Body of pancreas (tissue), 4 donors: ENCODE measurements at regions of chr3 and their contacts with region 1.

Region 1: GRCh38 chr3:141049681-141050080 is 1.5 kb upstream of the SPSB4 start:
- DNase-seq: no peak
- ATAC-seq: no peak
- H3K4me3 ChIP-seq: no peak overlapping the region
- H3K27ac ChIP-seq: no peak overlapping the region
- H3K4me1 ChIP-seq: peaks cover 35% of the 10 kb centered on the region
- H3K27me3 ChIP-seq: no peaks in the 10 kb centered on the region
- CTCF ChIP-seq: peak in 4 of 7 experiments; percentile 17 to 30 (median 22)
- POLR2A ChIP-seq: no peak

Region 2: GRCh38 chr3:140686948-140687347 is 362.7 kb before region 1 on chr3:
- intact Hi-C with region 1: no loop called
- DNase-seq: no peak
- ATAC-seq: no peak
- H3K4me3 ChIP-seq: no peak overlapping the region
- H3K27ac ChIP-seq: no peak overlapping the region
- H3K4me1 ChIP-seq: no peaks in the 10 kb centered on the region
- H3K27me3 ChIP-seq: no peaks in the 10 kb centered on the region
- CTCF ChIP-seq: no peak
- POLR2A ChIP-seq: no peak

Region 3: DNA sequence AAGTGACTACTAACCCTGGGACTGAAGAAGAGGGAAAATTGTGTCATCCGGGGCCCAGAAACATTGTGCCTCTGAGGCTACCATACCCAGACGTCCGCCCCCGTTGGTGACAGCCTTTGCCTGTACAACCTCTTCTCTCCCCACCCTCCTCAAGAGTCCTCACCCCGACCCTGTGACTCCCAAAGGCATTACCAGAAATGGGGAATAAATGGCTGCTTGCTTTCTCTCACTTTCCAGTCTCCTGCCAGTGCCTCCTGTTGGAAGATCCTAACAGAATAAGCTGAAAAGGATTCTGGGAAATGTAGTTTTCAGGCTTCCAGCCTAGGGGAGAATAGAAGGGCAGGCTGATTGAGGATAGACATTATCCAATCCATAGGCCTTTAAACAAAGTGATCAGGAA is 138.8 kb before region 1 on chr3:
- intact Hi-C with region 1: no loop called
- DNase-seq: no peak
- ATAC-seq: no peak
- H3K4me3 ChIP-seq: no peak overlapping the region
- H3K27ac ChIP-seq: no peak overlapping the region
- H3K4me1 ChIP-seq: peaks cover 18% of the 10 kb centered on the region
- H3K27me3 ChIP-seq: no peaks in the 10 kb centered on the region
- CTCF ChIP-seq: no peak
- POLR2A ChIP-seq: no peak

Region 4: GRCh38 chr3:141105828-141106628 is 56.3 kb after region 1 on chr3:
- intact Hi-C with region 1: loop called (anchors 5 kb)
- DNase-seq: peak; percentile 81 to 88 (median 84)
- ATAC-seq: no peak
- H3K4me3 ChIP-seq: no peak overlapping the region
- H3K27ac ChIP-seq: no peak overlapping the region
- H3K4me1 ChIP-seq: peaks cover 50% of the 10 kb centered on the region
- H3K27me3 ChIP-seq: no peaks in the 10 kb centered on the region
- CTCF ChIP-seq: peak; percentile 46 to 83 (median 68)
- POLR2A ChIP-seq: no peak

Region 5: DNA sequence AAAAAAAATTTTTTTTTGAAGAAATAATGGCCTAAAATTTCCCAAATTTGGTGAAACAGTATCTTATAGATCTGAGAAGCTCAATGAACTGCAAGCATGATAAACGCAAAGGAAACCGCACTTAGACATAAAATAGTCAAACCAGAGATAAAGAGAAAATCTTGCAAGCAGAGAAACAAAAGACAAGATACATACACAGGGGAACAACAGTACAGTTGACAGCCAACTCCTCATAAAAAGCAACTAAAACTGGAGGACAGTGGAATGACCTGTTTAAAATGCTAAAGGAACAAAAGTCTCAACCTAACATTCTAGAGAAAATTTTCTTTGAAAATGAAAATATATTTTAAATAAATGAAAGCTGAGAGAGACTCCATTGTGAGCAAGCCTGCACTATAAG is 544.7 kb after region 1 on chr3:
- intact Hi-C with region 1: no loop called
- DNase-seq: no peak
- ATAC-seq: no peak
- H3K4me3 ChIP-seq: no peak overlapping the region
- H3K27ac ChIP-seq: no peak overlapping the region
- H3K4me1 ChIP-seq: no peaks in the 10 kb centered on the region
- H3K27me3 ChIP-seq: no peaks in the 10 kb centered on the region
- CTCF ChIP-seq: no peak
- POLR2A ChIP-seq: no peak